WTC11 (cell line): ENCODE measurements at regions of chr5 and their contacts with region 1.

Region 1: DNA sequence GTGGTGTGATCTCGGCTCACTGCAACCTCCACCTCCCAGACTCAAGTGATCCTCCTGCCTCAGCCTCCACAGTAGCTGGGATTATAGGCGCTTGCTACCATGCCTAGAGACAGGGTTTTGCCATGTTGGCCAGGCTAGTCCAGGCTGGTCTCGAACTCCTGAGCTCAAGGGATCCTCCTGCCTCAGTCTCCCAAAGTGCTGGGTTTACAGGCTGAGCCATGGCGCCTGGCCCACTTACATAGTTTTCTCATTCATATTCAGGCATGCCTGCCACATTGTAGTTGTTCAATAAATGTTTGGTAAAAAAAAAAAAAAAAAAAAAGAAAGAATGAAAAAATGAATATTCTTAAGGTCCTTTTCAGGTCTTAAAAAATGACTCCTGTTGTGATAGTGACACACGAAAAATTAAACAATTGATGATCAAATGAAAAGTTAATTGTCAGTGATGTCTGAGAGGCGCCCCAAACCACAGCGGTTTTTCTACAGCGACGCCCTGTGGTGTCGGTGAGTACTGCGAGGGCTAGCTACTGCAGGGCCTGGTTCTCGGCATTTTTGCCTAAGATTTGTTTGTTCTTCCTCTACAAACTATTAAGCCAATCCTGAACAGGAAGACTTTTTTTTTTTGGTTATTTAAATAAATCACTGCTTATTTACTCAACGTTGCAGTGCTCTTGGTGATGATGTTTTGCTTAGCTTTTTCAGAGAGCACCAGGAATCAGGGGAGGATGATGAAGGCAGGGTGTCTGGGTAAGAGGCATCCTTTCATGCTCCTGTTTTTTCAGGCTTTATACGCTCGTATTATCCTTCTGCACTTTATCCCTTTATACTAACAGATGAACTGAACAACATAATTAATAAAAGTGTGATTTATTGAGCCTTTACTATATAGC is 67.0 kb upstream of the DPYSL3 start:
- DNase-seq: peak; percentile 80
- ATAC-seq: peak; percentile 64
- H3K4me3 Mint-ChIP-seq: no peak overlapping the region
- H3K27ac Mint-ChIP-seq: no peak overlapping the region
- H3K4me1 Mint-ChIP-seq: peaks cover 67% of the 10 kb centered on the region
- H3K27me3 Mint-ChIP-seq: no peaks in the 10 kb centered on the region
- CTCF ChIP-seq: peak; percentile 88

Region 2: DNA sequence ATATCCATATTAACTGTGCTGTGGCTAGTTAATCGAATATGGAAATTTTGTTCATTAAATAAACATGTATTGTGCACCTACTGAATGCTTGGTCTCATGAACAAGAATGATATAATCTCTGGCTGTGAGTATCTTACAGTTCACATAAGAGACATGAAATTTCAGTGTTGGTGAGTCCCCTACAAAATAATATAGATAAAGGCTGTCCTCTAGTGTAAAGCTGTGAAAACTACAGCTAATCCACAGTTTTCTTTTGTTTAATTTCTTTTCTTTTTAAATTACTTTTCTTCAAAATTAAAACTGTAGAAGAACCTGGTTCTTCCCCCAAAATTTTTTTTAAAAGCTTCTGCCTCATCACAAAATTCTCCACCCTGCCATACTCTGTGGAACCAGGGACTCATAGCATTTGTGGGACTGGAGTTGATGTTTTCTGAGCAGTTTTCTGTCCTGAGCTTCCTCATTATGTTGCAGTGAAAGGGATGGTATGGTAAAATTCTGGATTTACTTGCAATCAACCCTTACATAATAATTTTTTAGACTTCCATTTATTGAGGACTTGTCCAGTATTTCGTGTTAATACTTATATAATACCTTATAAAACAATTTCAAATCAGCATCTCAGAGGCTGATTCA is 207.0 kb before region 1 on chr5:
- CTCF ChIA-PET with region 1: interaction called, 23 read pairs
- POLR2A ChIA-PET with region 1: no interaction called
- DNase-seq: no peak
- ATAC-seq: peak; percentile 71
- H3K4me3 Mint-ChIP-seq: no peak overlapping the region
- H3K27ac Mint-ChIP-seq: no peak overlapping the region
- H3K4me1 Mint-ChIP-seq: peaks cover 6% of the 10 kb centered on the region
- H3K27me3 Mint-ChIP-seq: no peaks in the 10 kb centered on the region
- CTCF ChIP-seq: peak; percentile 31; the same call in 1 of the 2 replicates

Region 3: GRCh38 chr5:147397616-147398015 is 179.3 kb before region 1 on chr5:
- CTCF ChIA-PET with region 1: interaction called, 10 read pairs
- POLR2A ChIA-PET with region 1: no interaction called
- DNase-seq: peak; percentile 45
- ATAC-seq: peak; percentile 81
- H3K4me3 Mint-ChIP-seq: no peak overlapping the region
- H3K27ac Mint-ChIP-seq: peak overlapping the region; percentile 44; the same call in 1 of the 2 replicates
- H3K4me1 Mint-ChIP-seq: peaks cover 10% of the 10 kb centered on the region
- H3K27me3 Mint-ChIP-seq: no peaks in the 10 kb centered on the region
- CTCF ChIP-seq: no peak

Region 4: GRCh38 chr5:147448766-147449165 is 128.1 kb before region 1 on chr5:
- CTCF ChIA-PET with region 1: interaction called, 41 read pairs
- POLR2A ChIA-PET with region 1: interaction called, 13 read pairs
- DNase-seq: no peak
- ATAC-seq: no peak
- H3K4me3 Mint-ChIP-seq: peak overlapping the region; percentile 96
- H3K27ac Mint-ChIP-seq: peak overlapping the region; percentile 76
- H3K4me1 Mint-ChIP-seq: peaks cover 76% of the 10 kb centered on the region
- H3K27me3 Mint-ChIP-seq: no peaks in the 10 kb centered on the region; the same call in 1 of the 2 replicates
- CTCF ChIP-seq: no peak

Region 5: GRCh38 chr5:147464211-147464610 is 112.7 kb before region 1 on chr5:
- CTCF ChIA-PET with region 1: interaction called, 47 read pairs
- POLR2A ChIA-PET with region 1: interaction called, 5 read pairs
- DNase-seq: peak; percentile 46
- ATAC-seq: peak; percentile 83
- H3K4me3 Mint-ChIP-seq: no peak overlapping the region
- H3K27ac Mint-ChIP-seq: peak overlapping the region; percentile 73
- H3K4me1 Mint-ChIP-seq: peaks cover 57% of the 10 kb centered on the region
- H3K27me3 Mint-ChIP-seq: no peaks in the 10 kb centered on the region
- CTCF ChIP-seq: 0 out of 2 replicates have a peak, but pooled peaks have one; percentile 41

Region 6: DNA sequence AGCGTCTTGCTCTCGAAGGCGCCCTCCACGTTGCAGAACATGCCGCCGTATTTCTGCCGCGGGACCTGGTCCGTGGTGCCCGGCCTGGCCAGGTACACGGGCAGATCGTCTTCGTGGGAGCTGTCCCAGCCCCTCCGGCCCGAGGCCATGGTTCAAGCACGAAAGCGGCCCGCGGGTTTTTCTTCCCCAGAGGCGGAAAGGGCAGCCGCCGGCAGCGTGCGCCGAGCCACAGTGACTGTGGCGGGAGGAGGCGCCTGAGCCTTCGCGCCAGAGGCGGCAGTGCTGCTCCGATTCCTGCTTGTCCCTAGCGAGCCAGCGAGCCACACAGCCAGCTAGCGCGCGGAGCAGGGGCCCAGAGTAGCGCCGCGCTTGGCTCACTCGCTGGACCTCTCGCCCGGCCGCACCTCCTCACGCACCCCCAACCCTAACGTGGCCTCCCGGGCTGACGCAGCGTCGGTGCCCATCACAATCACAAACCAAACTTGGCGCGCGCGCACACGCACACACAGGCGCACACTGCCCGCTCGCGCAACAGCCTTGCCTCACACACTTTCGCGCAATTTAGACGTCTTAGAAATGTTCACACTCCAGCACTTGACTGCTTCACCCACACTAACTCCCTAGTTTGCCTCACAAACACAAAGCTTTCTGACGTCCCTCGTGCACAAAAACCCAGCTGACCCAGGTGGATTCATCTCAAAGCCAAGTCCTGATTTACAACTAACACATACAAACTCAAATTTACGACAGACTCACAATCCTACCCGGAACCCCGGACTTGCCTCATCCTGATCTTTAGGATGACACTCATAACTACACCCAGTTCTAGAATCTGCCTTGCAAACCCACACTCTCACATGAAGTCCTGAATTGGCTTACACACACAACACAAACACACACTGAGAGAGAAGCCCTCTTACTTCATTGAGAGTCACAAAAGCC is 66.9 kb before region 1 on chr5 and contains the start of gene DPYSL3:
- CTCF ChIA-PET with region 1: interaction called, 30 read pairs
- POLR2A ChIA-PET with region 1: interaction called, 3 read pairs
- DNase-seq: peak; percentile 85
- ATAC-seq: peak; percentile 96
- H3K4me3 Mint-ChIP-seq: peak within 1 kb of the TSS; percentile 69
- H3K27ac Mint-ChIP-seq: no peak within 1 kb of the TSS
- H3K4me1 Mint-ChIP-seq: peaks cover 27% of the 10 kb centered on the region
- H3K27me3 Mint-ChIP-seq: peaks cover 20% of the 10 kb centered on the region
- CTCF ChIP-seq: no peak
- total RNA-seq, gene DPYSL3: 329 to 358 TPM (median 338 TPM) in 3 replicates